ENCODE measurements at regions of chr20 and their contacts with region 1.

Region 1: DNA sequence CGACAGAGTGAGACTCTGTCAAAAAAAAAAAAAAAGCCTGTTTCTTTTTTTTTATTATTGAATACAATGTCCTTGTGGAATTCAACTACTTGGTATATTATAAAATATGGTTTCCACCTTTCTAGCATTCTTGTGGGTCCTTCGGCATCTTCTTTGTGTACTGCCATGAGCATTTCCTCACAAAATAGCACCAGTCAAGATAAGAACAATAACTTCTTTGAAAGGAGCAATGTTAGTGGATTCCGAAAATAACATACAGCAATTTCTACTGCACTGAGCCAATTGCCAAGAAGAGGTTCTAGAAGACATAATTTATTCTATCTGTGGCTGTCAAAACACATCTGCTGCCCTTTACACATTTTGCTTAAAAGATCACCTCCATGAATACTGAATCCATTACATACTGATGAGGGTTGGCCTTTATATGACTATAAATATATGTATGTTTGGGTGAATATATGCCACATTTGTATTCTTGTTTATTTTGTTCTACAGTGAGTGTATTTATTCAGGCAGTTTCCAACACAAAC is 19.1 kb upstream of the SPTLC3 start:
- DNase-seq: no peak
- H3K4me3 ChIP-seq: no peak overlapping the region
- H3K27ac ChIP-seq: no peak overlapping the region
- H3K4me1 ChIP-seq: no peaks in the 10 kb centered on the region
- H3K27me3 ChIP-seq: no peaks in the 10 kb centered on the region
- CTCF ChIP-seq: no peak

Region 2: DNA sequence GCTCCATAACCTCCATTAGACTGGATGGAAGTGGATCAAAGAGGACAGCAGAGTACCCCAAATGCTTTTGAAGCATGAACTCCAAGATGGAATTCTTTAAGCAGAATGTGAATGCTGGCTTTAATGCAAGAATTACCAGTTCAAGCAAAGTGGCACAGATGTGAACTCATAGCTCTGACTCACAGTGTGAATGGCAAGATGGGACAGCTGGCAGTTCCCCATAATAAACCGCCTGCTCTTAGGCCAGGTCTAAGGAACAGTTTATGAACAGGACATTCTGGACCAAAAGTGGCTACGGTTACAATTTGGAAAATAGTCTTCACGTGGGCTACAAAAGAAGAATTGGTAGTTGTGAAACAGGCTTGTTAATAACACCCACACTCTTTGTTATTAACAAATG is 95.6 kb after region 1 on chr20:
- CTCF ChIA-PET with region 1: no interaction called
- POLR2A ChIA-PET with region 1: no interaction called
- intact Hi-C with region 1: loop called (anchors 5 kb)
- DNase-seq: no peak
- H3K4me3 ChIP-seq: no peak overlapping the region
- H3K27ac ChIP-seq: no peak overlapping the region
- H3K4me1 ChIP-seq: no peaks in the 10 kb centered on the region
- H3K27me3 ChIP-seq: no peaks in the 10 kb centered on the region
- CTCF ChIP-seq: no peak

Region 3: DNA sequence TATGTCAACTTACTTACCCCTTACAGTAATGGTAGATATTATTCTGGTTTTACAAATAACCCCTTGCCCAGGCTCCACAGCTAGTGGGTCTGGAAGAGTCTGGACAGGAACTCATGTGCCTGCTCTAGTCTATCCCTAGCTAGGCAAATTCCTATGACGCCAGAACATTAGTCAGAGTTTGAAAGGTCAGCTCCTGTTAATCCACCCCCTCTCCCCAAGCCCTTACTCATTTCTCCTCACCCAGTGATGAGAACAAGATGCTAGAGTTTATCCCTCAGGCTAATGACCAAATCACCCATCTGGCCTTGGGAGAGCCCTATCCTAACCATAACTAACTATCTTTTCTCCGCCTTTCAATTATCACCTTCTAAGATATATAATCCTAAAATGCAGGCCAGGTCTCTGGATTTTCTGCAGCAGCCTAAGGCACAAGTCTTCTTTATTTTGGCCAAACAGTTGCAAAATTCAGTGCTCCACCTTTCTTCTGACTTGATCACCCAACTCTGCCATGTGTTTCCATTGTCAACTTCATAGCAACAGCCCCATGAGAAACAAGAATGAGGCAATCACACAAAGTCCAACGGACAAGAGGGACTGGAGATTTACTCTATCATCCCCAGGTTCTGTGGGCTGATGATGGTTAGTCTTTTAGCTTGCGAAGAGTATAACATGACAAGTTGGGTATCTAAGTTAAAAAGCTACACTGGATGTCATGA is 535.7 kb after region 1 on chr20:
- CTCF ChIA-PET with region 1: no interaction called
- POLR2A ChIA-PET with region 1: no interaction called
- intact Hi-C with region 1: no loop called
- DNase-seq: no peak
- H3K4me3 ChIP-seq: no peak overlapping the region
- H3K27ac ChIP-seq: no peak overlapping the region
- H3K4me1 ChIP-seq: no peaks in the 10 kb centered on the region
- H3K27me3 ChIP-seq: no peaks in the 10 kb centered on the region
- CTCF ChIP-seq: no peak